Activated CD4-positive, alpha-beta memory T cell treated with anti-CD3 and anti-CD28 coated beads for 36 hours (primary cell): ENCODE measurements at regions of chr17 and their contacts with region 1.

Region 1: GRCh38 chr17:5249615-5250014 is 15.0 kb upstream of the SCIMP start:
- DNase-seq: peak; percentile 73
- H3K4me3 Mint-ChIP-seq: no peak overlapping the region
- H3K27ac Mint-ChIP-seq: no peak overlapping the region
- H3K4me1 Mint-ChIP-seq: peaks cover 8% of the 10 kb centered on the region
- H3K27me3 Mint-ChIP-seq: no peaks in the 10 kb centered on the region

Region 2: DNA sequence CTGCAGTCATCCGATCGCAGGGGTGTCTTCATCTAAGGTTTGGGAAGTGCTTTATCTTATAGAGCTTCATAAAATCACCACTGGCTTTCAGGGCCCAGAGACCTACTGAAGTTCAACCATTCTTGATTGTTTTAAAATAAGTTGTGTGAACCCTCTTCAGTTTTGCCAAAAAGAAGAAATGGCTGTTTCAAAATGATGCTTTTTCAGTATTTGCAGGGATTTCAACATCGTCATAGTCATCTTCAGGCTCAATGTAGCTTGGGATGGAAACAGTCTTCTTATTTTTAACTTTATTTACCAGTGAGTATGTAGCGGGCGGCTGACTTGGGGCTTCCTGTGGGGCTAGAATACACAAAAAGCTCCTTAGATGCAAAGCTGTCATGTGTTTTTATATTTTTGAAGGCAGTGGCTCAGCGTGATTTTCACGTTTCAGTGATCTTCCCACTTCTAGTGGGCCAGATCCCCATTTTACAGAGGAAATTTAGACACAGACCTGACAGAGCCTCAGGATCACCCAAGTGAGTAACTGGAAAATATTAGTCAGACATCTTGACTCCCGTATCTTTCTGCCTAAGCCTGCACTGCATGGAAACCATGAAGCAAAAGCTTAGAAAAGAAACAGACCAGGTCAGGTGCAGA is 38.9 kb before region 1 on chr17:
- CTCF ChIA-PET with region 1: no interaction called
- POLR2A ChIA-PET with region 1: no interaction called
- intact Hi-C with region 1: no loop called
- DNase-seq: no peak
- H3K4me3 Mint-ChIP-seq: no peak overlapping the region
- H3K27ac Mint-ChIP-seq: no peak overlapping the region
- H3K4me1 Mint-ChIP-seq: no peaks in the 10 kb centered on the region
- H3K27me3 Mint-ChIP-seq: no peaks in the 10 kb centered on the region

Region 3: DNA sequence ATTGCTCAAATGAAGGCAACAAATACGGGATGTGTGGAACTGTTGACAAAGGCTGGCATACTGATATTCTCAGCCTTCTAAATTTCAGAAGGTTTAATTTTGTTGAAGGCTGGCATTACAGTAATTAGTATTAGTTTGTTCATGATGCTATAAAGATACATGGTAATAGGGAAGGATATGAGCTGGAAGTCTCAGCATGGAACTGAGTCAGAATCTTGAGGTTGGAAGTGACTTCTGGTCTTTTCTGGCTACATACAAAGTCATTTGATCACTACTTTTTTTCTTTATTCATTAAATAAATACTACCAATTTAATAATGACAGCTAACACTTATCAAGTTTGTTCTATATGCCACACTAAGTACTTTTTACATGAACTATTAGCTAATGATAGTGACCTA is 55.0 kb after region 1 on chr17:
- CTCF ChIA-PET with region 1: interaction called, 8 read pairs
- POLR2A ChIA-PET with region 1: no interaction called
- intact Hi-C with region 1: loop called (anchors 5 kb)
- DNase-seq: no peak
- H3K4me3 Mint-ChIP-seq: no peak overlapping the region
- H3K27ac Mint-ChIP-seq: no peak overlapping the region
- H3K4me1 Mint-ChIP-seq: peaks cover 45% of the 10 kb centered on the region
- H3K27me3 Mint-ChIP-seq: no peaks in the 10 kb centered on the region